ENCODE measurements at regions of chr15 and their contacts with region 1.

Region 1: DNA sequence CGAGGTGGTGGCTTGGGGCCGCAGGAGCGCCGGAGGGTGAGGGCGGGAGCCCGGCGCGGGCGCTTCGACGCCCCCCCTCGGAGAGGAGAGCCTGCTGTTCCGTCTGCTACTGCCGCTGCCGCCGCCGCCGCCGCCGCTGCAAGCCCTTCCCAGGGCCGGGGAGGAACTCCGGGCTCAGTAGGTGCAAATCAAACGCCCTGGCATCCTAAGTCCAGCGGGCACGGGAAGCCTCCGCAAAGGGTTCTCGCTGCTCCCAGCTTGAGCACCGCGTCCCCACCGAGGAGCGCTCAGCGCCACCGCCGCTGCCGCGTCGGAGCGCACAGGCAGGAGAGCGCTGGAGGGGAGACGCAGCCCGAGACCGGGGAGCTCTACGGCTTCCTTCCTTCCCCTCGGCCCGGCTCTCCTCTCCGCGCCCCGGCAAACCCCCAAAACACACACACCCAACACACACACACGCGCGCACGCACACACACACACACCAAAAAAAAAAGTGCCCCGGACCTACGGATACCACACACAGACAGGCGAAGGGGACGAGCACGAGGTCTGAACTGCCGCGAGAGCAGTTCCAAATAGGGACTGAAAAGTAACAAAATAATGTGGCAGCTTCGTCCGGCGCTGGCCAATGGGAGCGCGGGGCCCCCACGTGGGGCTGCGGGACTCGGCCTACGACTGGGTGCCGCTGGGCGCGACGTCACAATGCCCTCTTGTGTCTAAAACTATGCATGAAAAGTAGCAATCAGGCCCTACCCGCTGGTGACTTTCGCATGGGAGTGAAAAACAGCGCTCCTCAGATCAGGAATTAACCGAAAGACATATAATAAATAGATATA is at the start of gene TLE3:
- DNase-seq: peak; percentile 98
- ATAC-seq: peak; percentile 67 to 80 (median 74)
- H3K4me3 ChIP-seq: peak within 1 kb of the TSS; percentile 54 to 90 (median 80)
- H3K27ac ChIP-seq: peak within 1 kb of the TSS; percentile 70 to 99 (median 94)
- H3K4me1 ChIP-seq: peaks cover 32 to 85% (median 73%) of the 10 kb centered on the region in 9 donors
- H3K27me3 ChIP-seq: peaks cover 0 to 7% (median 0%) of the 10 kb centered on the region in 7 donors
- CTCF ChIP-seq: peak; percentile 27 to 71 (median 56)
- total RNA-seq, gene TLE3: 9.7 to 21.7 (median 13.6) TPM

Region 2: DNA sequence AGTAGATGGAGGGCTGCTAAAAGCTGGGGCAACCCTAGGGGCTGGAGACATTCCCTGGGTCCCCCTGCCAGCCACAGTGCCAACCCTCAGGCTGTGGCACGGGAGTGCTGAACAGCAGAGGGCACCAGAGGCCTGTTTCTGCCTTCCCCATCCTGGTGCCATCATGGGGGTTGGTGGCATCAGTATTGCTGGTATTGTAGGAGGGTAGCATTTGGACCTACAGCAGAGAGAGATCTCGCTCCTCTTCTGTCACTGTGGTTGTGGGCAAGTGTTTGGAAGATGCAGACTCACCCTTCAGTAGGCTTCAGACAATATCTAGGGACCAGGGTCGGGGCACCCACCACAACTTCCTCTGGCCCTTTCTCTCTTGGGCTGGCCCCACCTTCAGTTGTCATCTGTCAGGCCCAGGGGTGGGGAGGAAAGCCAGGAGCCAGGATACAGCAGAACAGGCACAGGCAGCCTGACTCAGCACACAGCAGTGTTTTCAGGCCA is 521.5 kb before region 1 on chr15:
- intact Hi-C with region 1: loop called in 1 of 10 experiments (anchors 10 kb)
- DNase-seq: peak; percentile 43 to 58
- ATAC-seq: peak; percentile 75 to 92 (median 86)
- H3K4me3 ChIP-seq: no peak overlapping the region
- H3K27ac ChIP-seq: no peak overlapping the region
- H3K4me1 ChIP-seq: peaks cover 0 to 31% (median 0%) of the 10 kb centered on the region in 9 donors
- H3K27me3 ChIP-seq: peaks cover 0 to 31% (median 17%) of the 10 kb centered on the region in 7 donors
- CTCF ChIP-seq: peak; percentile 49 to 78 (median 71)

Region 3: GRCh38 chr15:69623392-69624152 is 474.0 kb before region 1 on chr15:
- intact Hi-C with region 1: no loop called
- DNase-seq: peak in 1 of 2 donors; percentile 0
- ATAC-seq: no peak
- H3K4me3 ChIP-seq: no peak overlapping the region
- H3K27ac ChIP-seq: no peak overlapping the region
- H3K4me1 ChIP-seq: peaks cover 0 to 6% (median 0%) of the 10 kb centered on the region in 9 donors
- H3K27me3 ChIP-seq: peaks cover 0 to 29% (median 9%) of the 10 kb centered on the region in 7 donors
- CTCF ChIP-seq: no peak

Region 4: GRCh38 chr15:69729161-69729748 is 368.3 kb before region 1 on chr15:
- intact Hi-C with region 1: loop called in 1 of 10 experiments (anchors 10 kb)
- DNase-seq: peak in 1 of 2 donors; percentile 17
- ATAC-seq: no peak
- H3K4me3 ChIP-seq: no peak overlapping the region
- H3K27ac ChIP-seq: no peak overlapping the region
- H3K4me1 ChIP-seq: peaks cover 0 to 44% (median 0%) of the 10 kb centered on the region in 9 donors
- H3K27me3 ChIP-seq: peaks cover 0 to 32% (median 9%) of the 10 kb centered on the region in 7 donors
- CTCF ChIP-seq: peak; percentile 64 to 84 (median 73)

Region 5: DNA sequence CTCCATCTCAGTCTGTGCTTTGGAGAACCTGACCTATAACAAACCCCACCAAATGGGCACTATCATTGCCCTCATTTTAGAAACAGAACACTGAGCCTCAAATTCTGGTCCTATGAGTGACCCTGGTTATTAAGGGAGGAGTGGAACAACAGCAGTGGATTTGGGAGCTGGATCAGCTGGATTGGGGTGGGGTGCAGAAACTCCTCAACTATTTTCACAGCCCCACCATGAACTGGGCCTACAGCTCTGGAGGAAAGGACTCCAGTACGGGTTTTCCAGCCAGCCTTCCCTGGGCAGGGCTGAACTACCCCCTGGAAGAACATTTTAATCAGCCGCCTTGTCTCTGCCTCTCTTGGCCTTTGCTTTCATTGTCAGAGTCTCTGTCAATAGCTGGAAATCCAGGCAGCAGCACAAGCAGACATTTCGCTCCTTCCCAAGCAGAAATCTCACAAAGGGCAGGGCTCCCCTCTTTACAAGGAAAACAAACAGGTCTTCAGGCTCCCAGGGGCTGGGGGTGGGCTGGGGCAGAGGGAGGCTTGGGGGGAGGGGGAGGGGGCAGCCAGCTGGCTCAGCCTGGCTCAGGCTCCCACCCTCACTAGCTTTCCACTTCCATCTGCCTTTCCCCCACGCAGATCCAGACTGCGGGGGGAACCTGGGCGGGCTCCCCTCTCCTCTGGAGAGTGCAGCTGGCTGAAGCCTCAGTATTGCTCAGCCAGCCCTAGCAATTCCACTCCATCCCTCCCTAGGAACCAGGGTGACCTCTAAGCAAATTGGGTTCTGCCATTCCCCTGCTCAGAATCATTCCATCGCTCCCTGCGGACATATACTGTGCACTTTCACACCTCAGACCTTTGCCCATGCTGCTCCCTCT is 13.9 kb after region 1 on chr15:
- intact Hi-C with region 1: loop called in 2 of 10 experiments (anchors 1 kb)
- DNase-seq: peak; percentile 63 to 90
- ATAC-seq: peak; percentile 92 to 98 (median 94)
- H3K4me3 ChIP-seq: peak overlapping the region in 9 of 10 donors; percentile 1 to 39 (median 29)
- H3K27ac ChIP-seq: peak overlapping the region; percentile 72 to 94 (median 88)
- H3K4me1 ChIP-seq: peaks cover 8 to 40% (median 22%) of the 10 kb centered on the region in 9 donors
- H3K27me3 ChIP-seq: peaks cover 0 to 3% (median 0%) of the 10 kb centered on the region in 7 donors
- CTCF ChIP-seq: no peak

Region 6: GRCh38 chr15:70165716-70166284 is 68.2 kb after region 1 on chr15:
- intact Hi-C with region 1: loop called in 4 of 10 experiments (anchors 2 to 10 kb)
- DNase-seq: peak; percentile 75 to 87
- ATAC-seq: peak; percentile 87 to 95 (median 92)
- H3K4me3 ChIP-seq: no peak overlapping the region
- H3K27ac ChIP-seq: peak overlapping the region; percentile 44 to 92 (median 74)
- H3K4me1 ChIP-seq: peaks cover 19 to 35% (median 30%) of the 10 kb centered on the region in 9 donors
- H3K27me3 ChIP-seq: peaks cover 0 to 5% (median 0%) of the 10 kb centered on the region in 7 donors
- CTCF ChIP-seq: no peak

Region 7: GRCh38 chr15:70271422-70272088 is 174.0 kb after region 1 on chr15:
- intact Hi-C with region 1: loop called in 6 of 10 experiments (anchors 5 to 10 kb)
- DNase-seq: no peak
- ATAC-seq: peak in 5 of 8 donors; percentile 32 to 80 (median 44)
- H3K4me3 ChIP-seq: no peak overlapping the region
- H3K27ac ChIP-seq: peak overlapping the region in 2 of 10 donors; percentile 31 to 71
- H3K4me1 ChIP-seq: peaks cover 11 to 58% (median 46%) of the 10 kb centered on the region in 9 donors
- H3K27me3 ChIP-seq: no peaks in the 10 kb centered on the region
- CTCF ChIP-seq: no peak

Region 8: DNA sequence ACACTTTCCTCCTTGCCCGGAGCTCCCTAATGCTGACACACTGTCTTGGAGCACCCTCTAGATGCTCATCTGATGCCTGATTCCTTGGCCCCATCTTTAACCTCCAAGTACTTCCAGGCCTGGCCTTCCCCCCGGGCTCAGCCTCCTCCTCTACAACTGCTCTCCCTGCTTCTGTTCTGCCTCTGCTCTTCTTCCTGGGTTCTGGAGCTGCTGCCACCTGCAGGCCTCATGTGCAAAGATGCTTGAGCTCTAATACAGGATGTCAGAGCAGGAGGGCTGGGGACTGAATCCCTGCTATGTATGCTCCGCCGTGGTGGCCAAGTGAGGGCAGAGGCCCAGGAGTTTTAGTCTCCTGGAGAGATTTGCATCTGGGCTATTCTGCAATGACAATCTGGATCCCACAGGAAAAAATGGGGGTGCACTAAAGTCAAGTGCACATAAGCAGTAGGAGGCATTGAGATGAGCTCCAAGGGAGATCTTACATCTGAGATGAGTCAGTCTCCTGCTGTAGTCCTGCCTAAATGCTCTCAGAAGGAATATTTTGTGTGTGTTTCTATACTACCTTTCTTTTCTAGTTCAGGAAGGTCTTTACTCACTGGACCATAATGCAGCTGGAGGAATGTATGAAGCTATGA is 369.5 kb after region 1 on chr15:
- intact Hi-C with region 1: loop called in 3 of 10 experiments (anchors 10 kb)
- DNase-seq: peak; percentile 35 to 46
- ATAC-seq: peak; percentile 52 to 78 (median 62)
- H3K4me3 ChIP-seq: no peak overlapping the region
- H3K27ac ChIP-seq: no peak overlapping the region
- H3K4me1 ChIP-seq: peaks cover 0 to 21% (median 0%) of the 10 kb centered on the region in 9 donors
- H3K27me3 ChIP-seq: peaks cover 0 to 43% (median 16%) of the 10 kb centered on the region in 7 donors
- CTCF ChIP-seq: peak; percentile 29 to 72 (median 61)